Ascending aorta (tissue), 2 donors: ENCODE measurements at regions of chr15 and their contacts with region 1.

Region 1: GRCh38 chr15:49235446-49236124 is 65.5 kb downstream of the GALK2 start:
- DNase-seq: peak in 1 of 2 donors; percentile 70
- H3K4me3 ChIP-seq: no peak overlapping the region
- H3K27ac ChIP-seq: no peak overlapping the region
- H3K4me1 ChIP-seq: peaks cover 5 to 8% of the 10 kb centered on the region in 2 donors
- H3K27me3 ChIP-seq: no peaks in the 10 kb centered on the region
- CTCF ChIP-seq: peak; percentile 77 to 82 (median 78)

Region 2: DNA sequence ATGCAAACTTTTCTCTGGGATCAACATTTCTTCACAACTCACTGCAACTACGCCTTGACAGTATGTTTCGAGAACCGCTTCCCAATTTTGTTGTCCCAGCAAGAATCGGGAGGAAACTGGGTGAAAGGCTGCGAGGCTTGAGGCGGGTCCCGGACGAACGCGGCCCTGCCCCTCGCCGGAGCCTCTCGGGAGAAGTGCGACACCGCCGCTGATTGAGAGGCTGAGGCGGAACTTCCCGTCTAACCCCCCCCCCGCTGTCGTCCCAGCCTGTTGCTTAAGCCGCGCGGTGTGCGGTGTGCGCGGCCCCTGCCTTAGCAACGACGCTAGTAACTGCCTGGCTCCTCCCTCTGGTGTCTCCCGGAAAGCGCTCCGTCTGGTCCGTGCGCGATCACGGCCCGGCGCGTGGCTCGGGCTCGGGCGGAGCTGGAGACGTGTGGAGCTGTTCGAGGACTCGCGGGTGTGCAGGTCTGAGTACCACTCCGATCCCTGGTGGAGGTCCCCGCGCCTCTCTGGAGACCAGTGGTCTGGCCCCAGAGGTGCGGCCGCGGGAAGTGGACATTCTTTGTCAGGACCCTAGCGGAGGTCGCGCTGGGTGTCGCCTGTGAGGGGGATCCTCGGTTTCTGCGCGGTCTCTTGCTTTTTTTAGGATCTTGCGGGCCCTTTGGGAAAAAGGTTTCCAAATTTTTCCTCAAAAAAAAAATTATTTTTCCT is 385.2 kb after region 1 on chr15 and contains the starts of genes DTWD1 and FAM227B:
- intact Hi-C with region 1: loop called (anchors 5 kb)
- DNase-seq: peak; percentile 86 to 98
- H3K4me3 ChIP-seq: peak within 1 kb of the TSS; percentile 59 to 76
- H3K27ac ChIP-seq: peak within 1 kb of the TSS; percentile 84 to 90
- H3K4me1 ChIP-seq: peaks cover 0 to 11% of the 10 kb centered on the region in 2 donors
- H3K27me3 ChIP-seq: no peaks in the 10 kb centered on the region
- CTCF ChIP-seq: no peak
- total RNA-seq, gene DTWD1: 18.4 TPM
- total RNA-seq, gene FAM227B: not detected

Region 3: GRCh38 chr15:50003786-50004334 is 768.3 kb after region 1 on chr15:
- intact Hi-C with region 1: loop called (anchors 2 kb)
- DNase-seq: peak; percentile 31 to 83
- H3K4me3 ChIP-seq: no peak overlapping the region
- H3K27ac ChIP-seq: no peak overlapping the region
- H3K4me1 ChIP-seq: no peaks in the 10 kb centered on the region
- H3K27me3 ChIP-seq: no peaks in the 10 kb centered on the region
- CTCF ChIP-seq: peak; percentile 67 to 75 (median 71)

Region 4: DNA sequence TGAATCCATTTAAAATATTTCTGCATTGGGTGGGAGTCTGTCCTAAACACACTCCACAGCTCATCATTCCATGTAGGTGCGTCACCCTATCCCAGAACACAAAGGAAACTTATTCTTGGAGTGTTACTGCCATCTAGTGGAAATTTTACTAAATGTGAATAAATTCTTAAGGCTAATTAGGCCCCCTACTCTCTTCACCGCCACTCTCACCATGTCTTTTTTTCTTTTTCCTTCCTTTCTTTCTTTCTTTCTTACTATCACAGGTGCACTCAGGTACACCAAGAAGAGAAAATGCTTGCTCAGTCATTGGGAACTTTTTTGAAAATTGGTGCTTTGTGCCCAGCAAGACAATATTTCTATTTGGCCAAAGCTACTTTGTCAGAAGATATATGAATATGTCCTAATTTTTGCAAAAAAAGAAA is 909.9 kb after region 1 on chr15:
- intact Hi-C with region 1: loop called (anchors 1 kb)
- DNase-seq: no peak
- H3K4me3 ChIP-seq: no peak overlapping the region
- H3K27ac ChIP-seq: no peak overlapping the region
- H3K4me1 ChIP-seq: no peaks in the 10 kb centered on the region
- H3K27me3 ChIP-seq: no peaks in the 10 kb centered on the region
- CTCF ChIP-seq: peak; percentile 40 to 59 (median 48)